Posterior cingulate gyrus (tissue), 11 donors: ENCODE measurements at regions of chr2 and their contacts with region 1.

Region 1: GRCh38 chr2:130342533-130343275 is at the start of gene IMP4:
- DNase-seq: peak; percentile 95 to 100 (median 98)

Region 2: DNA sequence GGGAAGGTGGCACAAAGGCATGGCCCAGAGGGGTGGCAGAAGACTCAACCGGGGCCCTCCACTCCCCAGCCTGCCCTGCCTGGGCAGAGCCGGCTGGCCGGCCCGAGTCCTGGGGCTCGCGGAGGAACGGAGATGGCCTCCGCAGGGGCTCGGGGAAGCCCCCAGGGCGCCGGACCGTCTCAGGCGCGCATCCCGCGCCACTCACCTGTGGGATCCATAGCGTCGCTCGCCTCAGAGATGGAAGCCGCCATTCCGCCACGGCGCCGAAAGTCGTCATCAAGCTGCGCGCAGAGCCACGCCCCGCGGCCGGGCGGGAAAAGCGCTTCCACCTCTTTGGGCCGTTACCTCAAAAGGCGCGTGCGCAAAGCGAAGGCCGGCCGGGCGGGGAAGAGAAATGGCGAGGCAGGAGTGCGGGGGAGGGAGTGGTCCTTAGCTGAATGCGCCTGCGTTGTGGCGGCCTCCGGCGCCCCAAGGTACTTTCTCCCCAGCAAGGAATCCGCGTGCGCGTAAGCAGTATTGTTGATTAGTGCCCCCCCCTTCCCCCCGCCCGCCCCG is 161.3 kb before region 1 on chr2 and contains the start of gene SMPD4:
- intact Hi-C with region 1: loop called (anchors 5 kb)
- DNase-seq: peak; percentile 94 to 99 (median 96)

Region 3: GRCh38 chr2:130198343-130198742 is 144.4 kb before region 1 on chr2 and contains the start of gene TUBA3E:
- intact Hi-C with region 1: no loop called
- DNase-seq: peak in 1 of 10 donors; percentile 37

Region 4: GRCh38 chr2:130303169-130303568 is 39.5 kb before region 1 on chr2:
- intact Hi-C with region 1: no loop called
- DNase-seq: no peak

Region 5: GRCh38 chr2:130355578-130356431 is 13.1 kb after region 1 on chr2 and contains the start of gene PTPN18:
- intact Hi-C with region 1: loop called (anchors 1 kb)
- DNase-seq: peak; percentile 75 to 98 (median 88)

Region 6: GRCh38 chr2:130385709-130386108 is 43.0 kb after region 1 on chr2:
- intact Hi-C with region 1: loop called (anchors 5 kb)
- DNase-seq: peak in 1 of 10 donors; percentile 12